Panc1 (cell line): ENCODE measurements at regions of chr2 and their contacts with region 1.

Region 1: DNA sequence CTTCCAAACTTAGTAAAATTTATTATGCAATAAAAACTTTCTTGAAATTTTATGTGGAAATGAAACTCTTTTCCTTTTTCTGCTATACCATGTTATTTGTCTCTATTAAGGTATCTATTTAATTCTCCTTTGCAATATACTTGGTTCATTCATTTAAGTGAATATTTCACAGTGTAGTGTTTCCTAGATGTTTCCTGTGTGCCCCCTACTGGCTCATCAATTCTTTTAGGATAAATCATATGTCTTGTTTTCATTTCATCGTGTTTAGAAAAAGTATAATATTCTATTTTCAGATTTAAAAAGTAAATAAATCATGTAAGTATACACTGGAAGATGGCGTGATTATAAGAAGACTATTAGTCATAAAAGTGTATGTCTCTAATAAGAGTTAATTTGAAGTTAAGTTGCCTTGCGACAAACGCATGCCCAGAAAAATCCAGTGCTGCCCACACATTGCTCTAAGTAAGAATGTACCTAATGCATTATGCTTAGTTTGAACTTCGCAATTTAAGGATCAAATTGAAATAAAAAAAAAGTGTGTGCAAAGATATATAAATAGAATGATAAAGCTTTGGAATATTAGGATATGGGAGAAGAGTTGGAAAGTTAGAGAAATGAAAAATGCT is 525.4 kb downstream of the KCNJ3 start:
- DNase-seq: peak; percentile 1
- ATAC-seq: no peak
- H3K4me3 ChIP-seq: no peak overlapping the region
- H3K27ac ChIP-seq: no peak overlapping the region
- H3K4me1 ChIP-seq: no peaks in the 10 kb centered on the region
- H3K27me3 ChIP-seq: no peaks in the 10 kb centered on the region
- CTCF ChIP-seq: peak; percentile 36; the same call in 1 of the 2 replicates

Region 2: GRCh38 chr2:154452906-154453493 is 770.9 kb before region 1 on chr2:
- CTCF ChIA-PET with region 1: no interaction called
- POLR2A ChIA-PET with region 1: no interaction called
- in situ Hi-C with region 1: no loop called
- intact Hi-C with region 1: loop called (anchors 10 kb)
- DNase-seq: no peak
- ATAC-seq: no peak
- H3K4me3 ChIP-seq: no peak overlapping the region
- H3K27ac ChIP-seq: no peak overlapping the region
- H3K4me1 ChIP-seq: no peaks in the 10 kb centered on the region
- H3K27me3 ChIP-seq: no peaks in the 10 kb centered on the region
- CTCF ChIP-seq: peak; percentile 58

Region 3: DNA sequence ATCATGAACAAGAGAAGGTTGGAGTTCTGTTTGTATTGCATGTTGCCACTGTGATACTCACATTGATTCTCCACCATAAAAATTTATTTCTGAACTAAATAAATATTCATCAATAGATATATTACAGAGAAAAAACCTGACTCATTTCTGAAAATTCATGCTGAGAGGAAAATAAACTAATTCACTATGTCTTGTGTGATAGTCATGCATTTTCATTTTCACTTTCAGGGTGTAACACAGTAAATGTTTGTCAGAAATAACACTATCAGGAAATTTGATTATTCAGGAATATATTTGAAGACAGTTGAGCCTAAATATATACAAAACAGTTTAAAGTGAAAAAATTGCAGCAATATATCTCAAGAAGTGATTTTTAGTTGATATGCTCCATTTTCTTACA is 190.2 kb before region 1 on chr2:
- CTCF ChIA-PET with region 1: no interaction called
- POLR2A ChIA-PET with region 1: no interaction called
- in situ Hi-C with region 1: no loop called
- intact Hi-C with region 1: no loop called
- DNase-seq: no peak
- ATAC-seq: no peak
- H3K4me3 ChIP-seq: no peak overlapping the region
- H3K27ac ChIP-seq: no peak overlapping the region
- H3K4me1 ChIP-seq: no peaks in the 10 kb centered on the region
- H3K27me3 ChIP-seq: no peaks in the 10 kb centered on the region
- CTCF ChIP-seq: no peak